Calu3 (cell line): ENCODE measurements at regions of chr11 and their contacts with region 1.

Region 1: DNA sequence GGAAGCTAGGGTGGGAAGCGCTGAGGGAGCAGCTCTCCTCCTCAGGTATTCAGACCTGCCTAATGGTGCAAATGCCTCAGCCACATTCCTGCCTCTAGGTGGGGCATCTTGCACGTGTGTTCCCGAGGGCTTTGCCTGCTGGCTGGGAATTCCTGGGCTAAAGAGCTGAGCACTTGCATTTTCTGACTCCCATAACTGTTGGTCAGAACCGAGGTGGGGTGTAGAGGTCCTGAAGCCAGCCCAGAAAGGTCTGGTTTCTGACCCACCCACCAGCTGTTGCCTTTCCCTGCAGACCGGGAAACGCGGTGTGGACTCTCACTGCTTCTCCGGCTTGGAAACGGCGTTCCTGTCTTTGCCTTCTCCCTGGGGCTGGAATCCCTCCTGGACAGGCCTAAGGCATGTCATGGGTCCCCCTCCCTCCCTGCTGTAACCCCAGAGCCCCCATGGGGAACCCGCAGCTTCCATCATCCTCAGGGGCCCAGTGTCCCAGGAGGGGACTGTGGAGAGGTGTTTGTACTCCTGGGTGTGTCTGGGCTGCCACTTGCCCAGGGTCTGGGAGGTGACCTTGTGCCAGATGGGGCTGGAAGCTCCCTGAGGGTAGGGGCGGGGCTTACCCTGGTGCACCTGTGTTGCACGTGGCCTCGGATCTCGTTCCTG is 24.0 kb upstream of the SMIM38 start:
- DNase-seq: peak; percentile 91
- H3K4me3 Mint-ChIP-seq: no peak overlapping the region
- H3K27ac Mint-ChIP-seq: no peak overlapping the region
- H3K4me1 Mint-ChIP-seq: peaks cover 26% of the 10 kb centered on the region
- H3K27me3 Mint-ChIP-seq: no peaks in the 10 kb centered on the region
- CTCF ChIP-seq: peak; percentile 95

Region 2: GRCh38 chr11:68950268-68950667 is 181.5 kb before region 1 on chr11:
- CTCF ChIA-PET with region 1: no interaction called
- intact Hi-C with region 1: no loop called
- DNase-seq: no peak
- H3K4me3 Mint-ChIP-seq: no peak overlapping the region
- H3K27ac Mint-ChIP-seq: no peak overlapping the region
- H3K4me1 Mint-ChIP-seq: no peaks in the 10 kb centered on the region
- H3K27me3 Mint-ChIP-seq: no peaks in the 10 kb centered on the region
- CTCF ChIP-seq: no peak

Region 3: DNA sequence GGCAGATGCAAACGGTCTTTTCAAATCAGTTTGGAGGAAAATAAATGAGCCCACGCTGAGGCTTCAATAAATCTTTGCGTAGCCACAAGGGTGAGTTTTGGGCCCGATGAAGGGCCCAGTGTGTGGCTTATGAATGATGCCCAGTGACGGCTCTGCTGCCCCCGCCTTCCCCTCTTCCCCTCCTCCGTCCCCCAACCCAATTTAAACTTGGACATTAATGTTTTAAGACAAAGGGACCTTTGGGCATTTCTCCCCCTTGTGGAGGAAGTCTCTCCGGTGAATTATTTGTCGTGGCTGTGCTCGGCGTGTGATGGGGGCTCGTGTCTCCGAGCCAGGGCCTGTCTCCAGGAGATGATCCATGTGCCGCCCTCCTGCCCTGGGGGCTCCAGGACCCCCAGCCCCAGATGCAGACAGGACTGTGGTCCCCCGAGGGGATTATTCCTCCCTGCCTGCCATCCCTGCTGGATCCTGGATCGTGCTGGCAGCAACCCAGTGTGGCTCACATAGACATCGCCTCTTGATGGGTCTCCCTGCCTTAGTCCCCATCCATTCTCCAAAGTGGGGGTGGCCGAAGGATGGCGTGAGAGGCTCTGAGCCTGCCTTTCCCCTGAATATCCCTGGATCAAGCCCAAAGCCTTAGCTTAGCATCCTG is 80.3 kb after region 1 on chr11:
- CTCF ChIA-PET with region 1: no interaction called
- intact Hi-C with region 1: loop called (anchors 10 kb)
- DNase-seq: no peak
- H3K4me3 Mint-ChIP-seq: no peak overlapping the region
- H3K27ac Mint-ChIP-seq: no peak overlapping the region
- H3K4me1 Mint-ChIP-seq: peaks cover 41% of the 10 kb centered on the region
- H3K27me3 Mint-ChIP-seq: no peaks in the 10 kb centered on the region
- CTCF ChIP-seq: no peak

Region 4: DNA sequence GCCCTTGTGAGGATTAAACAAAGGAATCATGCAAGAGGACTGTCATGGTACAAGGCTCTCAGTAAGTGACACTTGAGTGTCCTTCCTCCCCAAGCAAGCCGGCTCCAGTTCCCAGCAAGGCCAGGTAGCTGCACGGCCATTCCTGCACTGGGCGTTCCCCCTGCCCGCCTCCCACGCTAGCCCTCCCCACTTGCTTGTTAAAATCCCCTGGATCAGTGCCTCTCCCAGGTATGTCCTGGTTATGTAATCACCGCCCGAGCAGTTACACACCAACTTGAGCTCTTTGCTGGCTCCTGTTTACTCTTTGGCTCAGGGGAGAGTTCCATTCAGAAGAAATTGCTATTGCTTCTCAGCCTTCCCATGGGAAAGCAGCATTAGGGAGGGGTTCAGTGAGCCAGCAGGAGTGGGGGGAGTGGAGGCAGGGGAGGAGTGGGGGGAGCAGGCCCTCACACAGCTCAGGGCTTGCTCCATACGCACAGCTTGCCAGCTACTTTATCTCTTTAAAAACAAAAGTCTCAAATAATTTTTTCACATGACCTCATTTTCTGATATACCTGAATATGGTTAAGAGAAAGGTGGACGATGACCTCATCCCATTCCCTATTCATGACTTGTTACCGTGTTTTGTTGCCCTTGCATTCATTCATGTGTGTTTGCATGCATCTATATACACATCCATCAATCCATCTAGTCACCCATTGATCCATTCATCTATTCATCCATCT is 142.9 kb after region 1 on chr11:
- CTCF ChIA-PET with region 1: interaction called, 10 read pairs
- intact Hi-C with region 1: no loop called
- DNase-seq: peak; percentile 82
- H3K4me3 Mint-ChIP-seq: peak overlapping the region; percentile 3
- H3K27ac Mint-ChIP-seq: peak overlapping the region; percentile 66
- H3K4me1 Mint-ChIP-seq: peaks cover 34% of the 10 kb centered on the region
- H3K27me3 Mint-ChIP-seq: no peaks in the 10 kb centered on the region
- CTCF ChIP-seq: no peak

Region 5: GRCh38 chr11:69540118-69540502 is 408.3 kb after region 1 on chr11:
- CTCF ChIA-PET with region 1: no interaction called
- intact Hi-C with region 1: no loop called
- DNase-seq: no peak
- H3K4me3 Mint-ChIP-seq: no peak overlapping the region
- H3K27ac Mint-ChIP-seq: no peak overlapping the region
- H3K4me1 Mint-ChIP-seq: peaks cover 22% of the 10 kb centered on the region
- H3K27me3 Mint-ChIP-seq: peaks cover 5% of the 10 kb centered on the region
- CTCF ChIP-seq: no peak